ENCODE measurements at regions of chrX and their contacts with region 1.

Region 1: GRCh38 chrX:18390941-18391538 is 34.4 kb upstream of the CDKL5 start:
- DNase-seq: peak; percentile 15 to 87 (median 62)

Region 2: DNA sequence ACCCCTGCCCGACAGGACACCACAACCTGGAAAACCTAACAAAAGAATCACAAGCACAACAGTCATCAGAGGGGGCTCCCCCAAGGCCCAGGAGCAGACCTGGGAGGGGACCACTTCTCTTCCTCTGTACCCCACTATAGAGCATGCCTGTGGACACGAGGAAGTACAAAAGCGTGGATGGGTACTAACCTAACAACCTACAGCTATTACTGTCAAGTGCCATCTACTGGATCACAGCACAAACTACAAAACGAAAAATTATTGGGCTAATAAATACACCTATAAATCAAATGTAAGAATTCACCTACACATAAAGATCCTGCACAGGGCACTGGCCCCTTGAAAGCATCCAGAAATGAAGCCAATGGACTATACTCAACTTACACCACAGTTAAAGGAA is 112.0 kb before region 1 on chrX:
- intact Hi-C with region 1: no loop called
- DNase-seq: no peak

Region 3: DNA sequence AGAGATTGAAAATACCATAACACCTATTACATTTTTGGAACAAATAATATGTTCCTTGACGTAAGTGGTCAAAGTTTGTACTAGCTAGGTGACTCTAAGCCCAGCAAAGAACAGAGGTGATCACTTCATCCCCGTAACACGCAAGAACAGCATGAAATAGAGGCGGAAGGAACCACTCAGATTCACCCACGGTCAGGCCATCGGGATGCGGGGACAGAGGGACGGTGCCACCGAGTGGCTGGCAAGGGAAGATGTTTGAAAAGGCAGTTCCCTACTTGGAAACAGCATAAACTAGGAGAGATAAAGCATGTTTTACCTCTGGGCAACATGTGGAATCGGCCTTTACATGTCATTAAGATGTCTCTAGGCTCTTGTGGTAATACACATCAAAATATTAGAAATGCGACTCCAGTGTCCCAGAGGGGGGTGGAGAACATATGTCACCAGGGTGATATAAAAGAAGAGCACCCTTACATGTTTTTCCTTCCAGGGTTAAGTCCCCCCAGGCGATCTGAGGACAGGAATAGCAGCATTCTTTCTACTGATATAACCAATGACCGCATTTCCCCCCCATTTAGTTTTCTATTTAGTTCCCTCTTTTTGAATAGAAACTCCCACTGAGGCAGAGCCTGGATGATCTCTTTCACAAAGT is 508.9 kb after region 1 on chrX:
- intact Hi-C with region 1: loop called (anchors 10 kb)
- DNase-seq: peak in 19 of 42 donors; percentile 30 to 69 (median 50)

Region 4: GRCh38 chrX:19280636-19281035 is 889.6 kb after region 1 on chrX:
- intact Hi-C with region 1: no loop called
- DNase-seq: no peak

Region 5: DNA sequence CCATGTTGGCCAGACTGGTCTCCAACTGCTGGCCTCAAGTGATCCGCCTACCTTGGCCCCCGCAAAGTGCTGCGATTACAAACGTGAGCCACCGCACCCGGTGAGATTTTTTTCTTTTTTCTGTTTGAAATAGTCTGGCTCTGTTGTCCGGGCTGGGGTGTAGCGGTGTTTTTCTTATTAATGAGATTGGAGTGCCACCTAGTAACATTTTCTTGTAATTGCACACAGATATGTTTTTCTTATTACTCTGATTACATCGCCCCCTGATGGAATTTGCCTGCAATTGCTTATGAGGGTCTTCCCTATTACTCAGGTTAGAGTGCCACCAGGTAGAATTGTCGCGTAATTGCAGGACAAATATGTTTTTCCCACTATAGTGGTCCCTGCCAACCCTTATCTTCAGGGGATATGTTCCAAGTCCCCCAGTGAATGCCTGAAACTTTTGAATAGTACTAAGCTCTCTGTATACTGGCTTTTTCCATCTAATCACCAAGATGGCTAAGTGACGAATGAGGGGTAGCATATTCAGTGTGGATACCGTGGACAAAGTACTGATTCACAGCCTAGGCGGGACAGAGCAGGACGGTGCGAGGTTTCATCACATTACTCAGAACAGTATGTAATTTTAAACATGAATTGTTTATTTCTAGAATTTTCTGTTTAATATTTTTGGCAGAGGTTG is 944.0 kb after region 1 on chrX:
- intact Hi-C with region 1: loop called (anchors 5 kb)
- DNase-seq: no peak